ENCODE measurements at regions of chrX and their contacts with region 1.

Region 1: GRCh38 chrX:115449742-115450141 is 111.2 kb upstream of the PLS3 start:
- DNase-seq: no peak
- H3K4me3 ChIP-seq: no peak overlapping the region
- H3K27ac ChIP-seq: no peak overlapping the region
- H3K4me1 ChIP-seq: no peaks in the 10 kb centered on the region
- H3K27me3 ChIP-seq: no peaks in the 10 kb centered on the region
- CTCF ChIP-seq: no peak

Region 2: DNA sequence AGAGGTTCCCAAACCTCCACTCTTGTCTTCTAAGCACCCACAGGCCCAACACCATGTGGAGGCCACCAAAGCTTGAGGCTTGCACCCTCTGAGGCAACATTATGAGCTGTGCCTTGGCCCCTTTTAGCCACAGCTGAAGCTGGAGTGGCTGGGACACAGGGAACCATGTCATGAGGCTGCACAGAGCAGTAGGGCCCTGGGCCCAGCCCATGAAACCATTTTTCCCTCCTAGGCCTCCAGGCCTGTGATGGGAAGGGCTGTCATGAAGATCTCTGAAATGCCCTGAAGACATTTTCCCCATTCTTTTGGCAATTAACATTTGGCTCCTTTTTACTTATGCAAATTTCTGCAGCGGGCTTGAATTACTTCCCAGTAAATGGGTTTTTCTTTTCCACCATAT is 245.7 kb before region 1 on chrX:
- intact Hi-C with region 1: no loop called
- DNase-seq: no peak
- H3K4me3 ChIP-seq: no peak overlapping the region
- H3K27ac ChIP-seq: no peak overlapping the region
- H3K4me1 ChIP-seq: no peaks in the 10 kb centered on the region
- H3K27me3 ChIP-seq: no peaks in the 10 kb centered on the region
- CTCF ChIP-seq: no peak

Region 3: GRCh38 chrX:115362334-115363095 is 87.2 kb before region 1 on chrX:
- intact Hi-C with region 1: loop called (anchors 10 kb)
- DNase-seq: no peak
- H3K4me3 ChIP-seq: no peak overlapping the region
- H3K27ac ChIP-seq: no peak overlapping the region
- H3K4me1 ChIP-seq: peaks cover 0 to 3% of the 10 kb centered on the region in 2 donors
- H3K27me3 ChIP-seq: no peaks in the 10 kb centered on the region
- CTCF ChIP-seq: no peak

Measured in ascending aorta (tissue), 2 donors.